Aorta (tissue), 5 donors: ENCODE measurements at regions of chr7 and their contacts with region 1.

Region 1: GRCh38 chr7:7640221-7641128 is at the start of gene UMAD1:
- DNase-seq: peak; percentile 99
- ATAC-seq: peak; percentile 100
- H3K4me3 ChIP-seq: peak within 1 kb of the TSS; percentile 46 to 82
- H3K27ac ChIP-seq: peak within 1 kb of the TSS; percentile 3 to 68
- H3K4me1 ChIP-seq: peaks cover 0 to 2% of the 10 kb centered on the region in 2 donors
- H3K27me3 ChIP-seq: no peaks in the 10 kb centered on the region
- total RNA-seq, gene UMAD1: 14.5 to 18.9 TPM

Region 2: DNA sequence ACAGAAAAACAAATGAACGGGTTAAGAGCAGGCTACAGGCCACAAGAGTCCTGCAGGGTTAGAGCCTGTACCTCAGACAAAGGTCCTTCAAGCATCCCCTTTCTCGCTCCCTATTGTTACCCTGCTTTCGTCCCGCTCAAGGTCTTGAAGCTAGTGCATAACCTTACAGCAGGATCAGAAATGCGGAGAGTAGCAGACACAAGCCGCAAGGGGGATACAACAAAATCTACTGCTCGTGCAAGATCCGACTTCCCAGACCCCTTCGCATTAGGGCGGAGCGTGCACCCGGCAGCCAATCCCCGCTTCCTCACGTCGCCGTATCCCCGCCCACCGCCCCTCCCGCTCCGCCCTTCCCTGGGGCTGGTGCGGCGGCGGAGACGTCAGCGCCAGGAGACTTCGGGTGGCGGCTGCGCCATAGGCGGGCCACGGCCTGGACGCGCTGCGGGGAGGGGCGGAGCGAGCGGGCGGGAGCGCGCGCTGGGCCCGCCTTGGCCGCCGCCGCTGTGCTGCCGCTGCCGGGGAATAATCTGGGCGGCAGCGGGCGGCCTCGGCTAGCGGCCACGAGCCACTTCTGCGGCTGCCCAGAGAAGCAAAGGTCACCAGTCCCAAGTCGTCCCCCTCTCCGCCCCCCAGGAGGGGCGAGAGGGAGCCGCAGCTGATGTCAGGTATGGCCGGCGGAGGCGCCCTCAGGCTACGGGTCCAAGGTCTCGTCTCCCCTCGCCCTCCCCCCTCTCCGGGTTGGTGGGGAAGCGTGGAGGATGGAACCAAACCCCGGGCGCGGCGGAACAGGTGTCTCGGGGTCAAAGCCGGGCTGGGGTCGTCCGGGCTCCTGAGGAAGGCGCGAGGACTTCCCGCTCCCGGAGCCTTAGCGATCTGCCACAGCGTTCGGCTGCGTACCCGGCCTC is 458.1 kb before region 1 on chr7 and contains the start of gene C1GALT1:
- intact Hi-C with region 1: loop called in 1 of 2 experiments (anchors 10 kb)
- DNase-seq: peak; percentile 98 to 99
- ATAC-seq: peak; percentile 99
- H3K4me3 ChIP-seq: peak within 1 kb of the TSS; percentile 74 to 94
- H3K27ac ChIP-seq: peak within 1 kb of the TSS; percentile 94 to 97
- H3K4me1 ChIP-seq: no peaks in the 10 kb centered on the region
- H3K27me3 ChIP-seq: no peaks in the 10 kb centered on the region
- total RNA-seq, gene C1GALT1: 21.9 to 43.8 TPM

Region 3: GRCh38 chr7:7512861-7513597 is 127.4 kb before region 1 on chr7:
- intact Hi-C with region 1: no loop called
- DNase-seq: no peak
- ATAC-seq: no peak
- H3K4me3 ChIP-seq: no peak overlapping the region
- H3K27ac ChIP-seq: no peak overlapping the region
- H3K4me1 ChIP-seq: no peaks in the 10 kb centered on the region
- H3K27me3 ChIP-seq: no peaks in the 10 kb centered on the region

Region 4: DNA sequence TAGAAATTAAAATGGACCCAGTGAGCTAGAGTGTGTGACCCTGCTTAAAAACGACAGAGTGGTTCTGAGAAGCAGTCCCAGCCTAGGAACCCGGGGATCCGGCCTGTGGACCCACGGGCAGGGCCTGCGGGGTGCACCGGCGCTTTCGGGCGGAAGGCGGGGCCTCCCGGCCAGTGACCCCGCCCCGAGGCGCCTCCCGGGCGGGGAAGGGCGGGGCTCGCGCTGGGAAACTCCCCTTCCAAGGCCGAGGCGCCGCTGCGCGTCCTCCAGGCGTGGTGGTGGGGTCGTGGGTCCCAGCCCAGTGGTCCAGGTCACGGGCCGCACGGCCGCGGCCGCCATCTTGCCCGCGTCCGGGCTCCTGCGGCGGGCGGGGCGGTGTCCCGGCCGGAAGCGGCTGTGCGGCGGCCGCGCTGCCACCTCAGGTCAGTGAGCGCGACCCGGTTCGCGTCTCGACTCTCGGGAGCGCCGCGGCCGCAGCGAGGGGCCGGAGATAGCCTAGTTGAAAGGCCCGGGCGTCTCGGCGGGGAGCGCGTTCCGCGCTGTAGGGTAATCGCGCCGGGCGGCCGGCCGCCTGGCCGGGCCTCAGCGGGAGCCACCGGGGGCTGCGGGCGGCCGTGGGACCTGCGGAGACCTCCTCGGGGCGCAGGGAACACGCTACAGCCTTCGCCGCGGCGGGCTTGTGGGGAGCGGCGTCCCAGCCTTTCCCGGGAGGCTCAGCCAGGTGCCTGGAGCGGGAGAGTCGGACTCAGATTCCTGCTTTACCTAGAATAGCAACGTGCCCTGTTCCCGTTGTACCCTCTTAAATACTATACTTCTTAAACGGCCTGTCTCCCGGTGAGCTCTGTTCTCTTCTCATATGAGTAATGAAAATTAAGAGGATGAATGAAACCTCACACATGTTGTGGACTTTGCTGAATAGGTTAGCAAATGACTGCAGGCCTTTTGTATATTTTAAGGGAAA is 73.5 kb before region 1 on chr7 and contains the start of gene MIOS:
- intact Hi-C with region 1: loop called in 1 of 2 experiments (anchors 2 kb)
- DNase-seq: peak; percentile 91 to 95
- ATAC-seq: peak; percentile 94
- H3K4me3 ChIP-seq: peak within 1 kb of the TSS; percentile 87 to 90
- H3K27ac ChIP-seq: peak within 1 kb of the TSS; percentile 82 to 88
- H3K4me1 ChIP-seq: no peaks in the 10 kb centered on the region
- H3K27me3 ChIP-seq: no peaks in the 10 kb centered on the region
- total RNA-seq, gene MIOS: 22.8 to 23.2 TPM